ENCODE measurements at regions of chr10 and their contacts with region 1.

Region 1: DNA sequence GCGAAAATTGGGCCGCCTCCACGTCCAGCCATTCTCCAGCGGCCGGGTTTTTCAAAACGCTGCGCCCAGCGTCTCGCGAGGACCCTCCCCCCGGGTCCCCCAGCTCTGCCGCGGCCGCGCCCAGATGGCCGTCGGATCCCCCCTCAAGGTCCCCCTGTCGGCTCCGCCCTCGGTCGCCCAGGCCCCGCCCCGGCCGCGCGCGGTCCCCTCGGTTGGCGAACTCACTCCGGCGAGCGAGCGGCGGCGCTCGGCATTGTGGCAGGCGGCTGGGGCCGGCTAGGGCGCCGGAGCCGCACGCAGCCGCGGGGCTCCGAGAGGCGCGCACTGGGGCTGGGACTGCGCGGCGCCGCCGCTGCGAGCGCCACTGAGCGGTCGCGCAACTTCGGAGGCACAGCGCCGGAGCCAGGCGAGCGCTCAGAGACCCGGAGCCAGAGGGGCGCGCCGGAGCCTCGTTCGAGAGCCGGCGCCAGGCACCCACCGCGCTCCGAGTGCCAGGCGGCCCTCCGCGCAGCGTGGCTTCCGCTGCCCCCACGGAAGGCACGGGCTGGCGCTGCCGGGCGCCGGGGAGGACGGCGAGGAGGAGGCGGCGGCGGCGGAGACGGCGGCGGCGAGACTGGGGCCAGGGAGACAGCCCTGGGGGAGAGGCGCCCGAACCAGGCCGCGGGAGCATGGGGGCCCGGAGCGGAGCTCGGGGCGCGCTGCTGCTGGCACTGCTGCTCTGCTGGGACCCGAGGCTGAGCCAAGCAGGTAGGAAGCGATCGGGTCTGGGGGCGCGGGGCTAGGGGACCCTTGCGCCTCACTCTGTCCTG is at the start of gene UNC5B:
- DNase-seq: peak; percentile 92
- ATAC-seq: peak; percentile 76 to 93 (median 87)
- H3K4me3 ChIP-seq: peak within 1 kb of the TSS; percentile 62 to 98 (median 82)
- H3K27ac ChIP-seq: peak within 1 kb of the TSS; percentile 61 to 96 (median 93)
- H3K4me1 ChIP-seq: peaks cover 15 to 68% (median 52%) of the 10 kb centered on the region in 9 donors
- H3K27me3 ChIP-seq: peaks cover 0 to 85% (median 10%) of the 10 kb centered on the region in 7 donors
- CTCF ChIP-seq: peak in 6 of 9 donors; percentile 31 to 61 (median 48)
- total RNA-seq, gene UNC5B: 9.0 to 20.6 (median 12.5) TPM

Region 2: DNA sequence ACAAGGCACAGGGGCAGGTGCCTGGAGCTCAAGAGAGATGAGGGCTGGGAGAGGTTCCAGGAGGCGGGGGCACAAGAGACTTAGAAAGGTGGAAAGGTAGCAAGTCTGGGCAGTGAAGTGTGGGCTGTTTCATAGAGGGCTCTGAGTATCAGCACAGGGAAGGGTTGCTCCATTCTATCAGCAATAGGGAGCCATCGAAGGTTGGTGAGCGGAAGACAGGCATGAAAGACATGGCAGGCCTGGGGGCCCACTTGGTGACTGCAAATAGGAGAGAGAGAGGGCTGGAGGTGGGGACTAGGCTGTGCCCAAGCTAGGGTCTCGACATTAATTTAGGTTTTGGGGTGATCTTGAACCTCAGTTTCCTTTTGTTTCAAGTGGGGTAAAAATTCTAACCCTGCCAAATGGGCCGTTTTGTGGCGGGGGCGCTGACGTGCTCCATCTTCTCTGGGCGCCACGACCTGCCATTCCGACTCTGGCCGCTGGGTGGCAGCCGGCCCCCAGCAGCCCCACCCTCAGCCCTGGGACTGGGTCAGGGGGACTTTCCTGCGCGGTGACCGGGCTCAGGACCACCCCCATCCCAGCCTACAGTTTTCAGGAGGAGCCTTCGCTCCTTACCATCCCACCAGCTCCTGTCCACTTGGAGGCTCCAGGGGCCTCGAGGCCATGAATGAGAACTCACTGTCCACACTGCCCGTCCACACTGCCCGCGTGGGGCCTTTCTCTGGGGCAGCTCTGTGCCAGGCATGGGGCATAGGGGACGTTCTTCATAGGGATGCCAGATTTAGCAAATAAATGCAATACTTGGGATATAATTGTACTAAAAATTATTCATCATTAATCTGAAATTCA is 286.9 kb before region 1 on chr10:
- intact Hi-C with region 1: loop called (anchors 1 to 5 kb)
- DNase-seq: peak; percentile 32 to 62
- ATAC-seq: peak; percentile 65 to 87 (median 83)
- H3K4me3 ChIP-seq: no peak overlapping the region
- H3K27ac ChIP-seq: peak overlapping the region in 1 of 10 donors; percentile 55
- H3K4me1 ChIP-seq: peaks cover 0 to 13% (median 4%) of the 10 kb centered on the region in 9 donors
- H3K27me3 ChIP-seq: peaks cover 0 to 10% (median 0%) of the 10 kb centered on the region in 7 donors
- CTCF ChIP-seq: peak; percentile 83 to 99 (median 94)

Region 3: DNA sequence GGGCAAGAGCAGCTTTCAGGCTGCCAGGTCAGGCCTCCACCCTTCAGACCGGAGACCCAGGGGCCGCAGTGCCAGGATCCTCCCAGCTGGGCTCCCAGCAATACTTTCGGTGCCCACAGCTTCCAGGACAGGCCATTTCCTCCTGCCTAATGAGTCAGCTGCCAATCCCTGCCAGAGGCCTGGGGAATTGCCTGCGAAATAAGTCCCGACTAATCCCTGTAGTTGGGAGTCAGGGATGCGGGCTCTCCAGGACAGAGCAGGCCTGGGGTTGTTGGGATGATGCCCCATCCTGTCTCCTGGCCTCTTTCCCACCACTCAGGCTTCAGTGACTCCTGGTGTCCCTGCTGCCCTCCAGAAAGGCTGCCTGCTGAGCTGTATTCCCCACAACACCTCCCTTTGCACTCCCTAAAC is 143.7 kb before region 1 on chr10:
- intact Hi-C with region 1: loop called in 2 of 10 experiments (anchors 5 to 10 kb)
- DNase-seq: peak; percentile 64 to 67
- ATAC-seq: peak; percentile 69 to 86 (median 78)
- H3K4me3 ChIP-seq: no peak overlapping the region
- H3K27ac ChIP-seq: peak overlapping the region; percentile 29 to 84 (median 79)
- H3K4me1 ChIP-seq: peaks cover 0 to 52% (median 18%) of the 10 kb centered on the region in 9 donors
- H3K27me3 ChIP-seq: peaks cover 0 to 3% (median 0%) of the 10 kb centered on the region in 7 donors
- CTCF ChIP-seq: no peak

Region 4: GRCh38 chr10:71263376-71263775 is 50.9 kb after region 1 on chr10:
- intact Hi-C with region 1: loop called in 8 of 10 experiments (anchors 1 to 10 kb)
- DNase-seq: peak; percentile 48 to 80
- ATAC-seq: peak in 7 of 8 donors; percentile 21 to 59 (median 51)
- H3K4me3 ChIP-seq: no peak overlapping the region
- H3K27ac ChIP-seq: peak overlapping the region; percentile 52 to 89 (median 78)
- H3K4me1 ChIP-seq: peaks cover 36 to 100% (median 98%) of the 10 kb centered on the region in 9 donors
- H3K27me3 ChIP-seq: no peaks in the 10 kb centered on the region
- CTCF ChIP-seq: no peak

Region 5: GRCh38 chr10:71285180-71285545 is 72.6 kb after region 1 on chr10:
- intact Hi-C with region 1: loop called in 2 of 10 experiments (anchors 1 to 5 kb)
- DNase-seq: no peak
- ATAC-seq: peak; percentile 47 to 74 (median 64)
- H3K4me3 ChIP-seq: no peak overlapping the region
- H3K27ac ChIP-seq: no peak overlapping the region
- H3K4me1 ChIP-seq: peaks cover 0 to 15% (median 4%) of the 10 kb centered on the region in 9 donors
- H3K27me3 ChIP-seq: no peaks in the 10 kb centered on the region
- CTCF ChIP-seq: peak; percentile 68 to 89 (median 78)

Measured in heart right ventricle (tissue), 16 donors.